ENCODE measurements at regions of chr3 and their contacts with region 1.

Region 1: DNA sequence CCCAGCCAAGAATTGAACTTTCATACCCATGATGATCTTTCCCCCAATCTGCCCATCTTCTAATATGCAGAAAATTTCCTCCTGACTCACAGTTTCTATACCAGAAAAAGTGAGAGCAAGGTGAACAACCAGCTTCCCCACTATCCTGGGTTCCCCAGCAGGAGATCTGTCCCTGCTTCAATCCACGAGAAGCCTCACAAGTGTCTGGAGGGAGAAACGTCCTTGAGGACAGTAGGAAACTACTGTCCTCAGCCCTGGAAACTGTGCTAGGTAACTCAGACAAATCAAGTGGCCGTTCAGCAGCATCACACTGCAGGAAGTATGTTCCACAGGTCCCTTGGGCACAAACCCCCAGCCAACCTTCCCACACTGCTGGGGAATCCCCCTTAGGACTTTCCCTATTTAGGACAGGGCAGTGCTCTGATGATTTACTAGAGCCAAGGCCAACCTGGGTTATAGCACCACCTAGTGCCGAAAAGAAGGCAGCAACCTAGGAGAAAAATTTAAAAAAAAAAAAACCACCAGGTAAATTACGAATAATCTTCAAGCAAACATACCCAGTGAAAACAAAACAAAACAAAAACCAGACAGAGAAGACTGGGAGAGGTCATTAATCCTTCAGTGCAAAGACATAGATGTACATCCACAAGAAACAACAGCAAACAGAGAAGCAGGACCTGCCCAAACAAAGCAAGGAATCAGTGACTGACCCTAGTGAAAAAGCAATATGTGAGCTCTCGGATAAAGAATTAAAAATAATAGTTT is 36.0 kb downstream of the MORC1 start:
- DNase-seq: peak; percentile 86
- ATAC-seq: peak; percentile 100
- H3K4me3 ChIP-seq: peak overlapping the region; percentile 18; the same call in 1 of the 2 replicates
- H3K27ac ChIP-seq: peak overlapping the region; percentile 72
- H3K4me1 ChIP-seq: peaks cover 5% of the 10 kb centered on the region
- H3K27me3 ChIP-seq: no peaks in the 10 kb centered on the region
- CTCF ChIP-seq: peak; percentile 78 to 84 (median 78)
- EP300 ChIP-seq: peak in 1 of 2 experiments; percentile 62; a peak in 1 of 4 replicates
- POLR2A ChIP-seq: no peak
- RAD21 ChIP-seq: peak; percentile 98

Region 2: DNA sequence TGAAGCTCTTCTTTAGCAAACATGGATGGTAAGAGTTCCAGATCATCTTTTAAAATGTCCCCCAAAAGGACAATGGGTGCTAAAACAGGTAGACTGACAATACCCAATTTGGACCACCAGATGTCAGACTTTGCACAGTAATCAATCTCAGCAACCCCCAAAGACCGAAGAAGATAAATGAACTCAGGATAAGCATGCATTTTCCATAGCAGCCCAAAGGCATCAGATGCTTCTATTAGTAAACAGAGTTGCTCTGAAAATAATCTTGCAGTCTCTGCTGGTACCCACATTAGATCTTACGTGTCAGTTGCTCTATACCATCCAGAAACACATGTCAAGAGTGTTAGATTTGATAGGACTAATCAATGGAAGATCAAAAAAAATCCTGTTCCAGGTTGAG is 592.2 kb before region 1 on chr3:
- CTCF ChIA-PET with region 1: interaction called, 3 read pairs
- POLR2A ChIA-PET with region 1: no interaction called
- RAD21 ChIA-PET with region 1: no interaction called
- SMC1A ChIA-PET with region 1: no interaction called
- in situ Hi-C with region 1: loop called (anchors 5 kb)
- intact Hi-C with region 1: no loop called
- DNase-seq: peak; percentile 31
- ATAC-seq: peak; percentile 90
- H3K4me3 ChIP-seq: no peak overlapping the region
- H3K27ac ChIP-seq: no peak overlapping the region
- H3K4me1 ChIP-seq: no peaks in the 10 kb centered on the region
- H3K27me3 ChIP-seq: no peaks in the 10 kb centered on the region
- CTCF ChIP-seq: peak; percentile 69 to 79 (median 70)
- EP300 ChIP-seq: no peak
- POLR2A ChIP-seq: no peak
- RAD21 ChIP-seq: peak; percentile 97

Region 3: GRCh38 chr3:108662130-108662738 is 419.7 kb before region 1 on chr3:
- CTCF ChIA-PET with region 1: interaction called, 6 read pairs
- POLR2A ChIA-PET with region 1: no interaction called
- RAD21 ChIA-PET with region 1: no interaction called
- SMC1A ChIA-PET with region 1: no interaction called
- in situ Hi-C with region 1: loop called (anchors 25 kb)
- intact Hi-C with region 1: loop called (anchors 1 kb)
- DNase-seq: peak; percentile 11
- ATAC-seq: peak; percentile 89
- H3K4me3 ChIP-seq: no peak overlapping the region
- H3K27ac ChIP-seq: no peak overlapping the region
- H3K4me1 ChIP-seq: no peaks in the 10 kb centered on the region
- H3K27me3 ChIP-seq: no peaks in the 10 kb centered on the region
- CTCF ChIP-seq: peak; percentile 63 to 77 (median 68)
- EP300 ChIP-seq: no peak
- POLR2A ChIP-seq: no peak
- RAD21 ChIP-seq: peak; percentile 91

Region 4: GRCh38 chr3:108914774-108915641 is 166.9 kb before region 1 on chr3:
- CTCF ChIA-PET with region 1: no interaction called
- POLR2A ChIA-PET with region 1: no interaction called
- RAD21 ChIA-PET with region 1: no interaction called
- SMC1A ChIA-PET with region 1: no interaction called
- in situ Hi-C with region 1: no loop called
- intact Hi-C with region 1: loop called (anchors 5 kb)
- DNase-seq: peak; percentile 19
- ATAC-seq: peak; percentile 96
- H3K4me3 ChIP-seq: no peak overlapping the region
- H3K27ac ChIP-seq: no peak overlapping the region
- H3K4me1 ChIP-seq: no peaks in the 10 kb centered on the region
- H3K27me3 ChIP-seq: no peaks in the 10 kb centered on the region
- CTCF ChIP-seq: peak; percentile 85 to 91 (median 89)
- EP300 ChIP-seq: no peak
- POLR2A ChIP-seq: no peak
- RAD21 ChIP-seq: peak; percentile 92

Region 5: DNA sequence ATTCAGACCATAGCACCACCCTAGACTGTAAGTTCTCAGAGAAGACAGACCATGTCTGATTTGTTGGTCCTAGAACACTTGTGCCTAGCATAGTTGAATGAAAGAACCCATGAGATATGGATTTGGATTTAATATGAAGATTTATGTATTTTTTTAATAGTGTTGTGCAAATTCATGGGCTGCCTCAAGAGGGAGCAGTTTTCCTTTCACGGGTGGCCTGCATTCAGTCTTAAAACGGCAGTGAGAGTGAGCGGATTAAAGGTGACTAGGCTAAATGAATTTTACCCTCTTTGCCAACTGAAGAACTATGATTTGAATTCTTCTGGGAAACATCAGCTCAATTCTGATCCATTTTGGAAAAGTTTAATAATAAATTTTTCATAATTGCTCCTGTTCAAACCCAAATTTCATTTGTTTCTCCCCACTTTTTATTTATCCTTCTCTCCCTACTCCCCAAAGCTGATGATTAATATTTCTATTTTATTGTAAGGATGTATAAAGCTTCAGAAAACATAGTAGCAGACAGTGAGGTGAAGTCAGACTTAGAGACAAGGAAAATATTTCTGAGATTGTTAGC is 31.2 kb before region 1 on chr3:
- CTCF ChIA-PET with region 1: interaction called, 31 read pairs
- POLR2A ChIA-PET with region 1: no interaction called
- RAD21 ChIA-PET with region 1: interaction called, 14 read pairs
- SMC1A ChIA-PET with region 1: interaction called, 4 read pairs
- in situ Hi-C with region 1: no loop called
- intact Hi-C with region 1: loop called (anchors 1 kb)
- DNase-seq: no peak
- ATAC-seq: peak; percentile 80
- H3K4me3 ChIP-seq: no peak overlapping the region
- H3K27ac ChIP-seq: no peak overlapping the region
- H3K4me1 ChIP-seq: no peaks in the 10 kb centered on the region
- H3K27me3 ChIP-seq: no peaks in the 10 kb centered on the region
- CTCF ChIP-seq: peak; percentile 57 to 80 (median 64)
- EP300 ChIP-seq: no peak
- POLR2A ChIP-seq: no peak
- RAD21 ChIP-seq: peak; percentile 69

Region 6: DNA sequence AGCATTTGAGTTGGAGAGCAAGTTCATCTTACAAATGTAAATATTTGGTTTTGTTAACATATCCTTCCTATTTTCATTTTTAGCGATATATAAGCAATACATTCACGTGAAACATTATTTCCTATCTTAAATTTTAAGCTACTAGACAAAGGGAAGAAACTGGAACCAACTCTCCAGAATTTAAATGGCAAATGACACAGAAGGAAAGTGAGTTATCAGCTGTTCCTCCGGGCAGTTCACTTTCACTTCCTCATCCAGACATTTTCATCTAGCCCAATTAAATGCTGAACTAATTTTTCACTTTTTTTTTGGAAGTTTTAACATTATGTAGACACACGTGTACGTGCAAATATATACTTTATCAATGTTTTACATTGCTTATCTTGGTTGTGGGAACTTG is 22.7 kb before region 1 on chr3:
- CTCF ChIA-PET with region 1: interaction called, 11 read pairs
- POLR2A ChIA-PET with region 1: no interaction called
- RAD21 ChIA-PET with region 1: interaction called, 11 read pairs
- SMC1A ChIA-PET with region 1: interaction called, 8 read pairs
- in situ Hi-C with region 1: no loop called
- intact Hi-C with region 1: no loop called
- DNase-seq: no peak
- ATAC-seq: peak; percentile 92
- H3K4me3 ChIP-seq: no peak overlapping the region
- H3K27ac ChIP-seq: no peak overlapping the region
- H3K4me1 ChIP-seq: no peaks in the 10 kb centered on the region
- H3K27me3 ChIP-seq: no peaks in the 10 kb centered on the region
- CTCF ChIP-seq: no peak
- EP300 ChIP-seq: peak in 1 of 2 experiments; percentile 88; a peak in 2 of 4 replicates
- POLR2A ChIP-seq: no peak
- RAD21 ChIP-seq: no peak

Region 7: DNA sequence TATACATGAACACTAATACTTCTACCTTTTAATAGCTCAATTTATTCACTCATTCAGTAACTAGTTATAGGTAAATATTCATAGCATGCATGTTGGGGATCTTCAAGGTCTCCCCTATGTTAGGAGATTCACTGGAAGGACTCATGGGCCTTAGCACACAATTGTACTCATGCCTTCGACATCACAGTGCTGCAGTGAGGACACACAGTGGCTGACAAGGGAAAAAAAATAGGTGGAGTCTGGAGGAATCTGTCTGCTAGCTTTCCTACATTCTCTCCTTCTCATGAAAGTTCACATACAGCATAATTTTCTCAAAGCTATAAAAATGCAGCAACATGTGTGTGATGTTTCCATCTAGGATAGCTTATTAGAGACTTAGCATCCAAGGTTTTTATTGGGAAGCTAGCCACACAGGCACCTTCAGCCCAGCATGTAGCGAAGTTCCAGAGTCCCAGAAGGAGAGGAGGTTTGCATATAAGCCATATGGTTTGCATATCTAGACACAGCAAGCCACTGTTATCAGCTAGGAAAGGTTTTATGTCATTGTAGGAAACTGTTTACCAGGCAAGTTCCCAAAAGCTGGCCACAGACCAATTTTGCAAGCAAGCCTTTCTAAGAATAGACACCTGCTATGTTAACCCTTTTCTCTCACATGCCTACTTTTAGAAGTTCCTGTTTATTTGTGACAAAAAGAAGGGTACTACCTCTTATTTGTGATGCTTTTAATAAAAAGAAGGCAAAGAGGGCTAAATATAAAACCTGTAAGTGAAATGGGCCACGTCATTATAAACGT is 10.4 kb before region 1 on chr3:
- CTCF ChIA-PET with region 1: interaction called, 20 read pairs
- POLR2A ChIA-PET with region 1: no interaction called
- RAD21 ChIA-PET with region 1: interaction called, 15 read pairs
- SMC1A ChIA-PET with region 1: interaction called, 22 read pairs
- in situ Hi-C with region 1: no loop called
- intact Hi-C with region 1: no loop called
- DNase-seq: no peak
- ATAC-seq: peak; percentile 68
- H3K4me3 ChIP-seq: peak overlapping the region; percentile 20
- H3K27ac ChIP-seq: no peak overlapping the region
- H3K4me1 ChIP-seq: peaks cover 13% of the 10 kb centered on the region
- H3K27me3 ChIP-seq: no peaks in the 10 kb centered on the region
- CTCF ChIP-seq: peak in 2 of 3 experiments; percentile 7 to 18; a peak in 1 of 6 replicates
- EP300 ChIP-seq: no peak
- POLR2A ChIP-seq: no peak
- RAD21 ChIP-seq: 0 out of 2 replicates have a peak, but pooled peaks have one; percentile 8

Region 8: GRCh38 chr3:109265295-109265694 is 183.4 kb after region 1 on chr3:
- CTCF ChIA-PET with region 1: no interaction called
- POLR2A ChIA-PET with region 1: no interaction called
- RAD21 ChIA-PET with region 1: no interaction called
- SMC1A ChIA-PET with region 1: no interaction called
- in situ Hi-C with region 1: no loop called
- intact Hi-C with region 1: no loop called
- DNase-seq: no peak
- ATAC-seq: no peak
- H3K4me3 ChIP-seq: no peak overlapping the region
- H3K27ac ChIP-seq: no peak overlapping the region
- H3K4me1 ChIP-seq: no peaks in the 10 kb centered on the region
- H3K27me3 ChIP-seq: no peaks in the 10 kb centered on the region
- CTCF ChIP-seq: no peak
- EP300 ChIP-seq: no peak
- POLR2A ChIP-seq: no peak
- RAD21 ChIP-seq: no peak

Measured in GM12878 (cell line).